SK-N-SH (cell line): ENCODE measurements at regions of chr7 and their contacts with region 1.

Region 1: GRCh38 chr7:142711746-142712619 is 37.3 kb upstream of the PRSS1 start:
- DNase-seq: peak; percentile 36
- H3K4me3 ChIP-seq: no peak overlapping the region
- H3K27ac ChIP-seq: no peak overlapping the region
- H3K4me1 ChIP-seq: no peaks in the 10 kb centered on the region; a peak in 1 of 4 replicates
- H3K27me3 ChIP-seq: peaks cover 6% of the 10 kb centered on the region; the same call in 1 of the 2 replicates
- CTCF ChIP-seq: peak; percentile 90
- EP300 ChIP-seq: no peak
- RAD21 ChIP-seq: peak; percentile 59

Region 2: DNA sequence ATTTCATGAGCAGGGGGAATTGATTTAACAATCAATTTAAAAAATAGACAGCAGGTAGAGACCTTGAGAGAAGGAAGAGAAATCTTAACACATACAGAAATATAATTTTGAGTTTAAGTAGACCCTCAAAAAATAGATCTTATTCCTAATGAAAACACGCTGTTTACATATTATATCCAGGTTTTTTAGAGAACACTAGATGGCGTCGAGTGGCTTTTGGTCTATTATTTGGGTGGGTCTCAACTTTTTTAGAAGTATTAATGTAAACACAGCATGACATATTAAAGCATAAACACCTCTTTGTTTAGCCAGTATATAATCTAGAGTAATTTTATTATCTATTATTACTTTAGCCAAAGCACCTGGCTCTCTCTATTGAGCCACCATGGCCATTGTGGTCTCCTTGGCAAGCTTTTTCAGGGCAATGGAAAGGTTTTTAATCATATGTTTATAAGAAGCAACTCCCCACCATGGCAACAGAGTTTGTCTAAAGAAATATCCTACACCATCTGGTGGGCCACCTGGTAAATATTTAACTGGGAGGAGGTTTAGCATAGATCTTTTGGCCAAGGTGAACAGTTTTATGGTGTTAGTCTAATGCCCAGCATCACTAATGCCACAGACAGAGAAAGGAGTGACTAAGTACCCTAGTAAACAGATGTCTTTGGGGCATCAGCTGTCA is 22.4 kb before region 1 on chr7:
- CTCF ChIA-PET with region 1: interaction called, 16 read pairs
- POLR2A ChIA-PET with region 1: no interaction called
- DNase-seq: no peak
- H3K4me3 ChIP-seq: no peak overlapping the region
- H3K27ac ChIP-seq: no peak overlapping the region
- H3K4me1 ChIP-seq: no peaks in the 10 kb centered on the region
- H3K27me3 ChIP-seq: no peaks in the 10 kb centered on the region
- CTCF ChIP-seq: peak; percentile 39
- EP300 ChIP-seq: no peak
- RAD21 ChIP-seq: peak; percentile 31; the same call in 1 of the 2 replicates

Region 3: GRCh38 chr7:142733271-142733670 is 21.3 kb after region 1 on chr7:
- CTCF ChIA-PET with region 1: interaction called, 12 read pairs
- POLR2A ChIA-PET with region 1: interaction called, 3 read pairs
- DNase-seq: no peak
- H3K4me3 ChIP-seq: no peak overlapping the region
- H3K27ac ChIP-seq: no peak overlapping the region
- H3K4me1 ChIP-seq: no peaks in the 10 kb centered on the region
- H3K27me3 ChIP-seq: no peaks in the 10 kb centered on the region
- CTCF ChIP-seq: no peak
- EP300 ChIP-seq: no peak
- RAD21 ChIP-seq: no peak

Region 4: DNA sequence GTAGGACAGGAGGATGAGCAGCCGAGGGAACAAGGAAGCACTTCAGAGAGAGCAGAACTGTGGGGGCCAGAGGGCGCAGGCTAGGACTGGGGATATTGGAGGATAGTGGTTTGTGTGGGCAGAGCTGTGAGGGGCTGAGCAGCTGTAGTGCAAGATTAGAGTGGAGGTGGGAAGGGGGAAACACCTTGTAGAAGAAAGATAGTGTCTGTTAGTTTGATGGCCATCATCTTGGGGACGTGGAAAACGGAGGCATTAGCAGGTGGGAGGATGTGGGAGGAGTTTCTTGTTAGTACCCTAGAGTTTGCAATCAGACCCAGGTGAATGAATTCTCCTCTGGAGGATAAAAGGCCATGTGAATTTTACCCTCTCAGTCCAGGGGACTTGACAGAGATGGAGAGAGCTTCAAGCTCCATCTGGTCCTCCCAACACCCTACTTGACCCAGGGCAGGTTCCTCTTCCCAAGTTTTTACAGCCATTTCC is 92.8 kb after region 1 on chr7:
- CTCF ChIA-PET with region 1: no interaction called
- POLR2A ChIA-PET with region 1: no interaction called
- DNase-seq: no peak
- H3K4me3 ChIP-seq: no peak overlapping the region
- H3K27ac ChIP-seq: no peak overlapping the region
- H3K4me1 ChIP-seq: peaks cover 6 to 21% of the 10 kb centered on the region in 2 experiments; a peak in 3 of 4 replicates
- H3K27me3 ChIP-seq: 0 out of 2 replicates have a peak, but pooled peaks cover under 1% of the 10 kb centered on the region
- CTCF ChIP-seq: no peak
- EP300 ChIP-seq: no peak
- RAD21 ChIP-seq: no peak